Heart right ventricle (tissue), 16 donors: ENCODE measurements at regions of chr3 and their contacts with region 1.

Region 1: DNA sequence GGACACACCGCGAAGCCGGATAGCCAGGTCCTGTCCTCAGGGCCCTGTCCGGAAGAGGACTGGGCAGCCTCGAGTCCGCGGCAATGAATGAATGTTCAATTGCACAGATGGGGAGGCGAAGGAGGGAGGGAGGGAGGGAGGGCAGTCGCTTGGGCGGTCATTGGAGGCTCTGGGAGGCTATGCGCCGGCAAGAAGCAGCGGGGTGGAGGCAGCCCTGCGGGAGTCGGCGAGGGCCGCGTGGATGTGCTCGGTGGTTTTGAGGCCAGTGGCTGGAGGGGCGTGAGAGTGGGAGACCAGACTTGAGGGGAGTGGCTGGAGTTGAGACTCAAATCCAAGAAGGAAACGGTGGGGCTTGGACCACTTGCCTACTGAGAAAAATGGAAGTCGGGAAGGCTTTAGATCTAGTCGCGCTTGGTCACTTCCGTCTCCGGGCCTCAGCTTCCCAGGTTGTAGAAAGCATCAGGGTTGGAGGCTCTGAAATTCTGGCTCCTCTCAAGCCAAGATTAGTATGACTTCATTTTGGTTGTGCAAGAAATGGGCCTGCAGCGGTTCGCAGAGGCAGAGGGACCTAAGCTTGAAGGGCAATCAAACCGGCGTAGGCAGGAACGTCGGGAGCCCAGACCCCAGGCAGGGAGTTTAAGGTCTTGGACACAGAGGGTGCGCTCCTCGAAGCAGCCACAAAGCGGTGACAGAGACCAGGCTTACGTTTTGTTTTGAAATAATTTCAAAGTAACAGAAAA is 21.1 kb upstream of the PLXND1 start:
- DNase-seq: peak; percentile 72 to 77
- ATAC-seq: peak; percentile 19 to 61 (median 55)
- H3K4me3 ChIP-seq: peak overlapping the region; percentile 26 to 79 (median 66)
- H3K27ac ChIP-seq: peak overlapping the region; percentile 95 to 100 (median 99)
- H3K4me1 ChIP-seq: peaks cover 30 to 64% (median 53%) of the 10 kb centered on the region in 9 donors
- H3K27me3 ChIP-seq: no peaks in the 10 kb centered on the region
- CTCF ChIP-seq: peak; percentile 67 to 93 (median 79)

Region 2: DNA sequence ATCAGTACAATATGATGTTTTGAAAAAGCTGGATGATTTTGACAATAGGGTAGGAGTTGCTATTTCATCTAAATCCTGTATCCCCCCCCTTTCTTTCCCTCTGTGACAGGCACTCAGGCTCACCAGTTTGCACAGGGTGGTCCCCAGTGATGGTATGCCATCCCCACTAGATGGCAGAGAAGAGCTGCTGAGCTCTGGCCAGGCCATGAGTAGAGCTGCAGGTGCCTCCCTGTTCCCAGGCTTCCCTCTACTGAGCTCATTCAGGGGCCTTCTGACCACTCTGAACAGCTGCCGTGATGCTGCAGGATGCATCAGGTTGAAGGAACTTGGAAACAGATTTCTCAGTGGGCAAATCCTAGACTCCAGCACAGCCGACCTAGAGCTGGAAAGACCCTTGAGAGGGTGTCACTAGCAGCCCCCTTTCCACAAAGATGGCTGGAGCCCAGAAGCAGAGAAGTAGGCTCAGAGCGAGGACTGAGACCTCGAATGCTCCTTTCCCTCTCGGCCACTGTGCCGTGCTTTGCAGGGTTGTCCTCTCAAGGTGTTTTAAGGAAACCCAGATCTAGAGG is 244.2 kb before region 1 on chr3:
- intact Hi-C with region 1: loop called in 1 of 10 experiments (anchors 10 kb)
- DNase-seq: peak in 1 of 2 donors; percentile 55
- ATAC-seq: peak; percentile 84 to 90 (median 86)
- H3K4me3 ChIP-seq: no peak overlapping the region
- H3K27ac ChIP-seq: no peak overlapping the region
- H3K4me1 ChIP-seq: peaks cover 0 to 27% (median 17%) of the 10 kb centered on the region in 9 donors
- H3K27me3 ChIP-seq: no peaks in the 10 kb centered on the region
- CTCF ChIP-seq: peak; percentile 63 to 83 (median 77)